BJ (cell line): ENCODE measurements at regions of chr4 and their contacts with region 1.

Region 1: DNA sequence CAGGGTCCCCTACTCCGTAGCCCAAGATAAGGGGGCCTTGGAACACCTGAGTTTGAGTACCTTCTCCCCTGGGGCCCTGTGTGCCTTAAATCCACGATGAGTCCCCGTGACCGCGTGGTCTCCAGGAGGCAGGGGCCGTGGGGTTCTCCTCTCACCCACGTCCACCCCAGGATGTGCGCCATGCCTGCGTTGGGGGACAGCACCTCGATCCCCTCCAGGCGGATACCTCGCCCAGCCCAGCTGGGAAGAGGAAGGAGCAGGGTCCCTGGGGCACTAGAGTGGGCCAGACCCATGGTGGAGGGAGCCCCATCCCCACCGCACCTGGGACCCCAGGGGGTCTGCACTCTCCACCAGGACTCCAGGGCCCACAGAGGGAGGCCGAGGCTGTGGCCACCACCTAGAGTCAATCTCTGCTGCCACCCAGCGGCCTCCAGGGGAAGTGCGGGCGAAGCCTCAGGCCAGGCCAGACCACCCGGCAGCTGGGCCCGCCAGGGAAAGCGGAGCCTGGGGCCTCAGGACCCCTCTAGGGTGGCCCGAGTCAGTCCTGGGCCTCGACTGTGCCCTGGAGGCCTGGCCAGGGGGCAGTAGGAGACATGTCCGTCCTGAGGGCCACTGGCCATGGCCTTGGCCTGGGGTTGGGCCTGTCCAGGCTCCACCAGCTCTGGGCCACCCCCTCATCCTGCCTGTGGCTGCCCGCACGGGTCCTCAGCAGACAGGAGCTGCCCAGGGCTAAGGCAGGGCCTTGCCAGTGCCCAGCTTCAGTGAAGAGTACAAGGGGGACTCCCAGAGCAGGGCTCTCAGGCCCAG is 55.0 kb downstream of the FAM53A start:
- DNase-seq: no peak
- H3K4me3 ChIP-seq: no peak overlapping the region
- H3K27me3 ChIP-seq: no peaks in the 10 kb centered on the region
- CTCF ChIP-seq: peak; percentile 96

Region 2: DNA sequence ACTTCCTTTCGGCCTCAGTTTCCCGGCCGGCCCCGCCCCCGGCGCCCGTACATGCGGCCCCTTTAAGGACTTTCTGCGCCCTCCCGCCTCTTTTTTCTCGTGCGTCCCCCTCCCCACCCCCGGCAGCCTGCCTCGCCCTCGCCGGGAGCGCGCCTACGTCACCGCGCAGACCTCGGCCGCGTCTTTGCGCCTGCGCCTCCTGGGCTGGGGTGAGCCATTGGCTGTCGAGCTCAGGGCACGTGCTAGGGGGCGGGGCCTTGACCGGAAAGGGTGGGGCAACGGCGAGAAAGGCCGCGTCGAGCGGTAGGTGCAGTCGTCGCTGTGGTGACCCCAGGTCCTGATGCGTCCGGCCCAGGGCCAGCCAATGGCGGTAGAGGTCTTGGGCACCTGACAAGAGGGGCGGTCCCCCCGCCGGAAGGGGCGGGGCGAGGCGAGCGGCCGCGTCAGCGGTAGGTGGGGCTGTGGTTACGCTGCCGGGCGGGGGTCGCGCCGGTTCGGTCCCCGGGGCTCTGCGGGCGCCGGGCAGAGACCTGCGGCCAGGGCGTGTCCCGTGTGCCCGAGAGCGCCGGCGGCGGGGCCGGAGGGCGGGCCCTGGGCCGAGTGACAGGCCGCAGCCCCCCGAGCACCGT is 282.2 kb before region 1 on chr4 and contains the start of gene UVSSA:
- CTCF ChIA-PET with region 1: interaction called, 103 read pairs
- POLR2A ChIA-PET with region 1: no interaction called
- DNase-seq: peak; percentile 97
- H3K4me3 ChIP-seq: peak within 1 kb of the TSS; percentile 86
- H3K27me3 ChIP-seq: no peaks in the 10 kb centered on the region
- CTCF ChIP-seq: no peak
- polyA plus RNA-seq, gene UVSSA: 4.1 and 5.8 TPM in 2 replicates

Region 3: DNA sequence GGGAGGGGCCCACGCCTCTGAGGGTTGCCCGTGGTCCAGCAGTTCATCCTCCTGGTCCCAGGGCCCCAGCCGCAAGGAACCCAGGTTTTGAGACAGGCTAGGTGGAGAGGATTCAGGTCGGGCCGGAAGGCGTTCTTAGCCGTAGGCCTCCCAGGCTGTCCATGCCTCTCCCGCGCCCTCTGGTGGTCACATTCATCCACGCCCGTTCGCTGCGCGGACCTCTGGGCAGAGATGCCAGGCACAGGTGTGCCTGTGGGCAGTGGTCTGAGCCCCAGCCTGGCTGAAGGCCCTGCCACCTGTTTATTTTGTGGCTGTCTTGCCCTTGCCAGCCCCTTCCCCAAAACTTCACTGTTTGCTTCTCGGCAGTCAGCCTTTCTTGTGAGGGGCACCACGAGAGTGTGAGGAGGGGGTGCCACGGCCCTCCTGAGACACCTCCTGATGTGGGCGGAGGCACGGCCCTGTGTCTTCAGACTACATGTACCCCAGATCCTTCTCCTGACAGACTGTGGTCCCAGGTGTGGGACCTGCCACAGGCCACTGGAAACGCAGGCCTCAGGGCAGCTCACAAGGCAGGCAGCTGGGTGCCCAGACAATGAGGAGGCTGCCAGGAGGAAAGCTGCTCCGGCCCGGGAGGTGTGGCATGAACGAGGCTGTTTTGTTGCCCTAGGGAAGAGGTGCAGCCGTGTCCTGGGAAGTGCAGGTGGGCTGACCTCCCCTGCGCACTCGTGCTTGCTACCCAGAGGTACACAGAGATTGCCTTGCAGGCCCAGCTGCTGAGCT is 277.1 kb before region 1 on chr4:
- CTCF ChIA-PET with region 1: interaction called, 103 read pairs
- POLR2A ChIA-PET with region 1: no interaction called
- DNase-seq: no peak
- H3K4me3 ChIP-seq: no peak overlapping the region
- H3K27me3 ChIP-seq: no peaks in the 10 kb centered on the region
- CTCF ChIP-seq: peak; percentile 96

Region 4: GRCh38 chr4:1384675-1385372 is 244.3 kb before region 1 on chr4:
- CTCF ChIA-PET with region 1: no interaction called
- POLR2A ChIA-PET with region 1: no interaction called
- DNase-seq: no peak
- H3K4me3 ChIP-seq: no peak overlapping the region
- H3K27me3 ChIP-seq: no peaks in the 10 kb centered on the region
- CTCF ChIP-seq: no peak

Region 5: GRCh38 chr4:1615786-1616556 is 13.1 kb before region 1 on chr4:
- CTCF ChIA-PET with region 1: interaction called, 15 read pairs
- POLR2A ChIA-PET with region 1: no interaction called
- DNase-seq: no peak
- H3K4me3 ChIP-seq: no peak overlapping the region
- H3K27me3 ChIP-seq: no peaks in the 10 kb centered on the region
- CTCF ChIP-seq: no peak

Region 6: GRCh38 chr4:1644891-1645657 is 16.0 kb after region 1 on chr4:
- CTCF ChIA-PET with region 1: interaction called, 15 read pairs
- POLR2A ChIA-PET with region 1: no interaction called
- DNase-seq: no peak
- H3K4me3 ChIP-seq: no peak overlapping the region
- H3K27me3 ChIP-seq: no peaks in the 10 kb centered on the region
- CTCF ChIP-seq: no peak

Region 7: GRCh38 chr4:2305766-2306501 is 676.8 kb after region 1 on chr4:
- CTCF ChIA-PET with region 1: no interaction called
- POLR2A ChIA-PET with region 1: no interaction called
- DNase-seq: no peak
- H3K4me3 ChIP-seq: no peak overlapping the region
- H3K27me3 ChIP-seq: no peaks in the 10 kb centered on the region
- CTCF ChIP-seq: no peak